ENCODE measurements at regions of chr1 and their contacts with region 1.

Region 1: DNA sequence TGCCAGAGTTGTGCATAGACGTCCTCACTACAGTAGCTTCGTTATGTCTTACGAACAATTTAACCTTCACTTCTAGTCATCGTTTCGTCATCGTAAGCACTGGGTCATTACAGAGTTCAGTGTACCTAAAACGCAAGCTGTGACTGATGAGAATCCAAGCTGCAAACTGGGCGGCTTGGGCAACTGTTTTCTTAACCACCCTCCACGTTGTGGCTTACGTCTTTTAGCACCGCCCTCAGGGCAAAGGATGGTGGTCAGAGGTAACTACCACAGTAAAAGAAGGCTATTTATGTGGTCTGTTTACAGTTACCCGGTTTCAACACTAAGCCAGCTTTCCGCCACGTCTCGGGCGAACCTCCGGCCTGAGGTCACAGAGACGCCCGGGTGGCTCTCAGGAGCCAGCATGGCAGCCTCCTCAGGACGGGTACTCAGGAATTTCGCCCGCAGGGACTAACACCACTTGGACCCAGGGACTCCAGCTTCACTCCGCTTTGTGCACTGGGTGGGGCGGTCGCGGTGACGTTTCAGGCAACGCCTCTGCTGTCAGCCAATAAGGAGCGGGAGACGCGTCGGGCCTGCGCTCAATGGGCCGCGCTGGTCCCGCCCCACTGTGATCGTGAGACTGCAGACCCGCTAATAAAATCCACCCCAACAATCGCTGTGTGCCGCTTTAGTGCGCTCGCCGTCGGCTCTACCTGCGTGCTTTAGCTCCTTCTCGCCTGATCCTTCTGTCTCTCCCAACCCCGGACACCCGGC is at the start of gene CTH:
- DNase-seq: peak; percentile 92
- H3K4me3 ChIP-seq: peak within 1 kb of the TSS; percentile 79 to 86
- H3K27ac ChIP-seq: peak within 1 kb of the TSS; percentile 88 to 91
- H3K4me1 ChIP-seq: no peaks in the 10 kb centered on the region; a peak in 2 of 4 replicates
- H3K27me3 ChIP-seq: no peaks in the 10 kb centered on the region
- CTCF ChIP-seq: no peak
- EP300 ChIP-seq: no peak
- RAD21 ChIP-seq: no peak; the same call in 1 of the 2 replicates
- polyA plus RNA-seq, gene CTH: 3.9 and 4.2 TPM in 2 replicates

Region 2: DNA sequence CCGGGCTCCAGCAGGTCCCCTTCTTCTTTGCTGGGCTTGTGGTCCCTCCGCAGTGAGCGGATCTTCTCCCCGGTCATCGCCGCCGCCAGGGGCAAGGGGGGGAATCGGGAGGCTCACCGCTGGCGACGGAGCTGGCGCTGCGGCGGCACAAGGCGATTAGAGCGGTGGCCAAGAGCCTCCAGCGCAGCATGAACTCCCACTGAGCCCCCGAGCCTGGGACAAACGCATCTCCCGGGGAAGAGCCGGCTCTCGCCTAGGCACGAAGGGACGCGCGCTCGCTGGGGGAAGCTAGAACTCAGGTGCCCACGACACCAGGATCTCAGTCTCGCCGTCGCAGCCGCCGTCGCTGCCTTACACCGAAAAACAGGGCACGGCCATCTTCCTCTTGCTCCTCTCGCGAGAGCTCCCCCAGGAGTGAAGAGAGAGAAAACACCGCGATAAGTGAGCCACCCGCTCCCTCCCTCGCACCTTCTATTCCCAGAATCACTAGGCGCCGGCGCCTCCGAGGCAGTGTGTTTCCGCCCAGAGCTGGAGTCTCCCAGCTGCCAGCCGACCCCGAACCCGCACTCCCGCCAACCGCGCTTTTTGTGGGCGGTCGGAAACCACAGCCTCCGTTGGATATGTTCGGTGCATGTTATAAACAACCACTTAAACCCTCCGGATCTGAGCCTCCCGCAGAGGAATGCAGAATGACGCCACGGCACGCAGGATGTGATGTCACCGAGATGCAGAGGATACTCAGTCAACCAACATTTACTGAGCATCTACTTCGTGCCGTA is 56.3 kb before region 1 on chr1 and contains the start of gene ANKRD13C:
- CTCF ChIA-PET with region 1: no interaction called
- POLR2A ChIA-PET with region 1: interaction called, 27 read pairs
- DNase-seq: peak; percentile 94
- H3K4me3 ChIP-seq: peak within 1 kb of the TSS; percentile 80 to 91
- H3K27ac ChIP-seq: peak within 1 kb of the TSS; percentile 94
- H3K4me1 ChIP-seq: peaks cover 3 to 7% of the 10 kb centered on the region in 2 experiments; a peak in 3 of 4 replicates
- H3K27me3 ChIP-seq: no peaks in the 10 kb centered on the region
- CTCF ChIP-seq: no peak; the same call in 1 of the 2 replicates
- EP300 ChIP-seq: no peak
- RAD21 ChIP-seq: no peak
- polyA plus RNA-seq, gene ANKRD13C: 5.2 and 5.5 TPM in 2 replicates

Measured in SK-N-SH (cell line).